MCF 10A (cell line): ENCODE measurements at regions of chr14 and their contacts with region 1.

Region 1: DNA sequence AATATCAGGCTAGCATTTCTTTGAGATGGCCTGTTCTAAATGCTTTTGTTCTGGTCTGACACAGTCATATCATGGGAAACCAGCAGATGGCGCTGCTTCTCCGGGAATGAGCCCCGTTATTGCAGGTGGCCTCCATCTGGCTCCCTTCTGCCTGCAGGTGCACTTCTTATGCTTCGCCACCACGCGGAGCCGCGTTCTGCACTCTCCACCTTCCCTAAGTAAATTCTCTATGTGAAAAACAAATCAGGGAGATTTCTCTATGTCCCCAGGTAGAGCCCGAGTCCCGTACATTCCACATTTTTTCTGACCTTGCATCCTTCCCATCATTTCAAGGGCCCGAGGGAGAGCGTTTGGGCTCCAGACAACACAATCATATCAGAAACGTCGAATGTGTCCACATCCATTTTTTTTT is 26.2 kb downstream of the GLRX5 start:
- DNase-seq: peak; percentile 88
- H3K4me3 Mint-ChIP-seq: no peak overlapping the region
- H3K27ac Mint-ChIP-seq: no peak overlapping the region
- H3K4me1 Mint-ChIP-seq: no peaks in the 10 kb centered on the region
- H3K27me3 Mint-ChIP-seq: peaks cover 18% of the 10 kb centered on the region
- CTCF ChIP-seq: peak; percentile 96

Region 2: DNA sequence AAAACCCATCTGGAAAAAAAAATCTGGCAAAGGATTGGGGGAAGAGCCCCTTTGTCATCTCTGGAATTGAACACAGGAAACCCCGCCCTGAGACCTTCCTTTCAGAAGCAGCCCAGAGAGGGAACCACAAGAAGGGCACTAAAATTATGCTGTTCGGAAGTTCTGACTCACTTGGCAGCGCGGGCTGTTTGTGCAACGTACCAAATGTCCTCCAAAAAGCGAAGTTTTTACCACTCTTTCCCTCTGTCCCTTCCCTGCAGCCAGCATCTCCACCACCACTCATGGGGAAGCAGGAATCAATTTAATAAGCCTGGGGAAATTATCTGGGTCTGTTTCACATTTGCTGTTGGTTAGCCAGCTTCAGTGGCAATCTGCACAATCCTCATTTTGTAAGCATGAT is 41.3 kb before region 1 on chr14:
- CTCF ChIA-PET with region 1: no interaction called
- POLR2A ChIA-PET with region 1: no interaction called
- intact Hi-C with region 1: no loop called
- DNase-seq: peak; percentile 92
- H3K4me3 Mint-ChIP-seq: peak overlapping the region; percentile 23
- H3K27ac Mint-ChIP-seq: peak overlapping the region; percentile 23
- H3K4me1 Mint-ChIP-seq: peaks cover 47% of the 10 kb centered on the region
- H3K27me3 Mint-ChIP-seq: no peaks in the 10 kb centered on the region
- CTCF ChIP-seq: no peak

Region 3: DNA sequence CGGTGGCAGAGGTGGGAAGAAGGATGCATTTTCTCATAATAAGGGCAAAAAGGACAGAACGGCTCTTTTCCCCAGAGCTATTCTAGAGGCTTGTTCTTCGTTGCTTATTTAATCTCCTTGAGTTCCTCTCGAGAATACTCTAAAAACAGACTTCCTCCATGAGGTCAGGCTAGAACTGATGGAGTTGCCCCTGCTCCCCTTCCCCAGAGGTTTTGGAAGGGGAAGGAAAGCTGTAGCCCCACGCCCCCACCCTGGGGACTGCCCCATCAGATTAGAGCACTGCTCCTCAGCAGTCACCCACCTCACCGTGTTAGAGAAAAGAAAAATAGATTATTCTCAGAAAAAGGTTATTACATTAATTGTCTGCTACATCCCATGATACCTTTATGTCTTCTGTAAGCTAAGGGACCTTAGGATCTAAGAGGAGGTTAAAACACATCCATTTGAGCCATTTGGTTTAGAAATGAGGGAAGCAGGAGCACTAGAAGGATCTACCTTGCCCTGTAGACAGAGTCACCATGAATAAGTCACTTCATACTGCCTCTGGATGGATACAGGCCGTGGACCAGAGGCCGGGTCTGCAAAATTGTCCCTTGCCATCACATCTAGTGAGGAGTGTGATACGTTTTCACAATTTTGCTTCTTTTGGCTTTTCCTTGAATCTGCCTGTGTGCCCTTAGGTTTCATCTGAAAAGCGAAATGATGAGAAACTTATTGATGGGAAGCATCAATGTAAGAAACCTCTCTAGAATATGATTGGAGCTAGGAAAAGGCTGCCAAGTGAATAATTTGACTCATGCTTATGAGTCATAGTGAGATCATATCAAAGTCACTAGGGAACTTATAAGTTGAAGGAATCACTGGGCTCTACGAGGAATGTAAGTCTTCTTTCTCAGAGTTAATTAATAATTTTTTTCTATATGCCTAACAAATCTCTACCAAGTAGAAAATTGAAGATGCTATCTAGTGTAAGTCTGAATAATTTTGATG is 15.5 kb before region 1 on chr14:
- CTCF ChIA-PET with region 1: interaction called, 15 read pairs
- POLR2A ChIA-PET with region 1: interaction called, 5 read pairs
- intact Hi-C with region 1: no loop called
- DNase-seq: peak; percentile 71
- H3K4me3 Mint-ChIP-seq: no peak overlapping the region
- H3K27ac Mint-ChIP-seq: no peak overlapping the region
- H3K4me1 Mint-ChIP-seq: peaks cover 11% of the 10 kb centered on the region
- H3K27me3 Mint-ChIP-seq: no peaks in the 10 kb centered on the region
- CTCF ChIP-seq: no peak

Region 4: DNA sequence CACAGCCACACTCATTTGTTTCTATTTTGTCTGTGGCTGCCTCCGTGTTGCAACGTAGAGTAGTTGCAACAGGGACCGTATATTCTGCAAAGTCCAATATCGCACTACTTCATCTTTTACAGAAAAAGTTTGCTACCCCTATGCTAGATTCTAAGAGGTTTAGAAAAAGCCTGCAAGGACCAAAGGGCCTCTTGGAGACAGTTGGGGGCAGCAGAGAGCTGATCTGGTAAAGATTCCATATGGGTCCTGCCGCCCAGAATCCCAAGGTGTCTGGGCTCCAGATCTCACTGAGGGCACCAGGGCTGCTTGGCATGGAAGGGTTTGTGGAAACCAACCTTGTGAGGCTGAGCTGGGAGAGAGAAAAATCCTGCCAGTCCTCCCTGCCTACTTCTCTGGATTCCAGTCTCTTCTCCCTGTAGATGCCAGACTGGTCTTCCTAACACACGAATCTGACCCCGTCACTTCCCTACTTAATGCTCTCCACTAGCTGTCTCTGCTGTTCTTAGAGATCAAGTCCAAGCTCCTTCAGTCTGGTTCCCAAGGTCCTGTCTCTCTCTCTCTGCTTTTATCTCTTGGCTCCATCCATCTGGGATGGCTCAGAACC is 48.5 kb after region 1 on chr14:
- CTCF ChIA-PET with region 1: interaction called, 7 read pairs
- POLR2A ChIA-PET with region 1: interaction called, 5 read pairs
- intact Hi-C with region 1: loop called (anchors 2 kb)
- DNase-seq: peak; percentile 70
- H3K4me3 Mint-ChIP-seq: no peak overlapping the region
- H3K27ac Mint-ChIP-seq: no peak overlapping the region
- H3K4me1 Mint-ChIP-seq: no peaks in the 10 kb centered on the region
- H3K27me3 Mint-ChIP-seq: peaks cover 84% of the 10 kb centered on the region
- CTCF ChIP-seq: peak; percentile 77

Region 5: DNA sequence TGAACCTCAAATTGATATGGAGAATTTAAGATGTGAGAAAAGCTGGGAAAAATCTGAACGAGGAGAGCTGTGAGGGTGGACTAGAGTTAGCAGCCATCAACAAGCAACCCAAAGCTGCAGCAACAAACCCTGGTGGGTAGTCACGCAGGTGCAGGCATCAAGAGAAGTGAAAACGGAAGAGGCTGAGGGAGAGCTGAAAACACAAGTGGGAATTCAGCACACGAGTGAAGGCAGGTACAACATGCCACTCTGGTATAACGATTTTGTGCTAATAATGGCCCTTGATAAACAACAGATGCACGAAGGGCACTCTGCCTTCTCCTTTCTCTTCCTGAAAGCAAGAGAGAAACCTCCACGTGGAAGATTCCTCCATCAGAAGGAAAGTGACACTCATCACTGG is 136.8 kb after region 1 on chr14:
- CTCF ChIA-PET with region 1: interaction called, 5 read pairs
- POLR2A ChIA-PET with region 1: no interaction called
- intact Hi-C with region 1: loop called (anchors 1 kb)
- DNase-seq: no peak
- H3K4me3 Mint-ChIP-seq: no peak overlapping the region
- H3K27ac Mint-ChIP-seq: no peak overlapping the region
- H3K4me1 Mint-ChIP-seq: peaks cover 22% of the 10 kb centered on the region
- H3K27me3 Mint-ChIP-seq: peaks cover 38% of the 10 kb centered on the region
- CTCF ChIP-seq: no peak